ENCODE measurements at regions of chr6 and their contacts with region 1.

Region 1: GRCh38 chr6:47134476-47135189 is 92.5 kb upstream of the ADGRF1 start:
- DNase-seq: peak; percentile 98
- H3K4me3 ChIP-seq: peak overlapping the region; percentile 3
- H3K27ac ChIP-seq: peak overlapping the region; percentile 88
- H3K4me1 ChIP-seq: peaks cover 66% of the 10 kb centered on the region
- H3K27me3 ChIP-seq: no peaks in the 10 kb centered on the region
- CTCF ChIP-seq: no peak

Region 2: GRCh38 chr6:47146428-47147174 is 12.0 kb after region 1 on chr6:
- CTCF ChIA-PET with region 1: no interaction called
- POLR2A ChIA-PET with region 1: interaction called, 4 read pairs
- intact Hi-C with region 1: loop called (anchors 1 kb)
- DNase-seq: peak; percentile 98
- H3K4me3 ChIP-seq: no peak overlapping the region
- H3K27ac ChIP-seq: peak overlapping the region; percentile 88
- H3K4me1 ChIP-seq: peaks cover 37% of the 10 kb centered on the region
- H3K27me3 ChIP-seq: no peaks in the 10 kb centered on the region
- CTCF ChIP-seq: no peak

Measured in A673 (cell line).